MCF 10A (cell line): ENCODE measurements at regions of chr5 and their contacts with region 1.

Region 1: GRCh38 chr5:122163121-122164069 is 34.0 kb downstream of the ZNF474 start:
- DNase-seq: peak; percentile 92
- H3K4me3 Mint-ChIP-seq: peak overlapping the region; percentile 22
- H3K27ac Mint-ChIP-seq: peak overlapping the region; percentile 81
- H3K4me1 Mint-ChIP-seq: peaks cover 23% of the 10 kb centered on the region
- H3K27me3 Mint-ChIP-seq: no peaks in the 10 kb centered on the region
- CTCF ChIP-seq: no peak

Region 2: GRCh38 chr5:120614531-120615180 is 1548.7 kb before region 1 on chr5:
- CTCF ChIA-PET with region 1: no interaction called
- POLR2A ChIA-PET with region 1: no interaction called
- intact Hi-C with region 1: loop called (anchors 10 kb)
- DNase-seq: peak; percentile 49
- H3K4me3 Mint-ChIP-seq: peak overlapping the region; percentile 43
- H3K27ac Mint-ChIP-seq: peak overlapping the region; percentile 93
- H3K4me1 Mint-ChIP-seq: peaks cover 41% of the 10 kb centered on the region
- H3K27me3 Mint-ChIP-seq: no peaks in the 10 kb centered on the region
- CTCF ChIP-seq: no peak

Region 3: GRCh38 chr5:122091936-122092600 is 71.3 kb before region 1 on chr5:
- CTCF ChIA-PET with region 1: interaction called, 237 read pairs
- POLR2A ChIA-PET with region 1: interaction called, 13 read pairs
- intact Hi-C with region 1: no loop called
- DNase-seq: peak; percentile 73
- H3K4me3 Mint-ChIP-seq: no peak overlapping the region
- H3K27ac Mint-ChIP-seq: no peak overlapping the region
- H3K4me1 Mint-ChIP-seq: peaks cover 5% of the 10 kb centered on the region
- H3K27me3 Mint-ChIP-seq: no peaks in the 10 kb centered on the region
- CTCF ChIP-seq: peak; percentile 70

Region 4: GRCh38 chr5:122111460-122111859 is 51.9 kb before region 1 on chr5:
- CTCF ChIA-PET with region 1: interaction called, 129 read pairs
- POLR2A ChIA-PET with region 1: interaction called, 12 read pairs
- intact Hi-C with region 1: no loop called
- DNase-seq: no peak
- H3K4me3 Mint-ChIP-seq: no peak overlapping the region
- H3K27ac Mint-ChIP-seq: no peak overlapping the region
- H3K4me1 Mint-ChIP-seq: peaks cover 6% of the 10 kb centered on the region
- H3K27me3 Mint-ChIP-seq: no peaks in the 10 kb centered on the region
- CTCF ChIP-seq: no peak

Region 5: DNA sequence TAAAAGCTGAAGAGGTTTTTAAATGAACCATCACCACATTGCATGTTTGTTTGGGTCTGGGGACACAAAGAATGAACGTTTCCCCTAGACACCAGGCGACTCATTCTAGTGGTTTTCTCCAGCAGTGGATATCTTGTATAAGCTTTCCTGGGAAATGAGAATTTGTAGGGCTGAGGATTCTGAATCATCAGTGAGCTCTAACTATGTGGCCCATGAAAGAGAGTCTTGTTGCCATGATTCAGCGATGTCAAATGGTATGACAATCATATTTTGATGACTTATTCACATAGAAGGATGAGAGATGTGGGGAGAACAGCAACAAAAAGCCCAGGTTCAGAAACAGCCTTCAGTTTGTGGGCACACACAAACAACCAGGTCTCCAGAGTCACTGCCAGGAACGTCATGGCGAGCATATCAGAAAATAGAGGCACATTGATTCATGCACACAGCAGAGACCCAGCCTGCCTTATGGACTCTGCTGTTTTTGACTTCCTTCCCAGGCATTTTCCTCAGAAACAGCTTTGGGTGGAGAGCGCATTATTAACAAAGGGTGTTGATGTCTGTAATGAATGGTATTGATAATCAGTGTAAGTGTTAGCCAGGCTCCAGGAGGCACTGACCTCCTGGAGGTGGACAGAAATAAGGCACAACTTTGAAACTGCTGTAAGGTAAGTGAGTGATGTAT is 20.8 kb before region 1 on chr5:
- CTCF ChIA-PET with region 1: interaction called, 118 read pairs
- POLR2A ChIA-PET with region 1: interaction called, 7 read pairs
- intact Hi-C with region 1: no loop called
- DNase-seq: peak; percentile 39
- H3K4me3 Mint-ChIP-seq: no peak overlapping the region
- H3K27ac Mint-ChIP-seq: peak overlapping the region; percentile 32
- H3K4me1 Mint-ChIP-seq: peaks cover 12% of the 10 kb centered on the region
- H3K27me3 Mint-ChIP-seq: no peaks in the 10 kb centered on the region
- CTCF ChIP-seq: no peak